ENCODE measurements at regions of chr15 and their contacts with region 1.

Region 1: DNA sequence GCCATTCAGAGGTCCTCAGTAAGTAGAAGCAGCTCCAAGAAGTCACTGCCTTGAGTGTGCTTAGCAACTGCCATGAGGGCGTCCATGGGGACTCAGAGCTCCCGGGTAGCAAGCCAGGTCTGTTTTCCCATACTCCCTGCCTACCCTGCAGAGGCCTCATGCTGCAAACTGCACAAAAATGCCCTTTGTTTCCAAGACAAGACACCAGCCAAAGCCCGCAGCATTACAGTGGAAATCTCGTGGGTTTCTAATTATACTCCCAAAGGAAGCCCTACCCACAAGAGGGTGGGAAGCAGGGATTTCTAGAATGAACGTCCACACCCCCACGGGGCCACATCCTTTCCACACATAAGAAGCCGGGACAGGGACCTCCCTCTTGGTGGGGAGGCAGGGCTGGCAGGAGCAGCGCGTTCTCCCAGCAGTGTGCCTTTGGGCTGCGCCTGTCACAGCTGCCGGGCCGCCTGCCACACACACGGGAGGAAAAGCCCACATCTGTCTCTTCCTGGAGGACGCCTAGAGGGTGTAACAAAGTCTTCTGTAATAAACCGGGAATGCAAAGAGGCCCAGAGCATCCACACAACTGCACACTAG is 31.1 kb downstream of the FAM174B start:
- DNase-seq: no peak
- H3K4me3 ChIP-seq: peak overlapping the region in 3 of 4 donors; percentile 9 to 20 (median 20)
- H3K27ac ChIP-seq: peak overlapping the region; percentile 63 to 74 (median 70)
- H3K4me1 ChIP-seq: peaks cover 36 to 43% (median 39%) of the 10 kb centered on the region in 4 donors
- H3K27me3 ChIP-seq: no peaks in the 10 kb centered on the region
- CTCF ChIP-seq: no peak
- EP300 ChIP-seq: no peak
- POLR2A ChIP-seq: no peak

Region 2: DNA sequence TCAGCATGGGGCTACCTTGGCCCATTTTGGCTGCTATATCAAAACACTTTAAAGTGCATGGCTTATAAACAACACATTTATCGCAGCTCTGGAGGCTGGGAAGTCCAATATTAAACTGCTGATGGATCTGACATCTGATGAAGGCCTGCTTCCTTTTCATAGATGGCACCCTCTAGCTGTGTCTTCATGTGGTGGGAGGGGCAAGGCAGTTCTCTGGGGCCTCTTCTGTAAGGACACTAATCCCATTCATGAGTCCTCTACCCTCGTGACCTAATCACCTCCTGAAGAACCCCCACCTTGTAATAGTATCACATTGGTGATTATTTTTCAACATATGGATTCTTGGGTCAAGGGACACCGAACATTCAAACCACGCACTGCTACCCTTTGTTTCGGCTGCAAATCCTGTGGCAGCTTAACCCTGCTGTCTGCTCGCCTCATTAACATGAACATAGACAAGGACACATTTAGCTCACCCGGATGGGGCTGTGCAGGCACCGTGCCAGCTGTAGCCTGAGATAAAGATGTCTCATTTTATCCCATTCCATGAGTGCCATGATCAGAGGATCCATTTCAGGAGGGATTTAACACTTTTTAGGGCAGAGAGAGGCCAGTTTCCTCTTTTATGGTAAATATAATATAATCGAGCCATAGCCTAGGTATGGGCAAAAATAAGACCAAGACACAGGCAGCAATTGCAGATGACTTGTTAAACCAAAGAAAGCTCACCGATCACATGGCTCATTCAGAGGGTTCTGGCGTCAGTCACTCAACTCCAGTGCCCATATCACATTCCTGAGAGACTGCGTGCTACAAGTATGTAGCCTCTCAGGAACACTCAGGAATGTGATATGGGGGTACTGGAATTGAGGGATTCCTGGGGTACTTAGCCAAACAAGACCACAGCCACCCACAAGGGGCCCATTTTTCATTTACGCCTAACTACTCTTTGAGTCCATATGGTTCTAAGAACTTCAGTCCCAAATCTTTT is 482.0 kb before region 1 on chr15:
- intact Hi-C with region 1: no loop called
- DNase-seq: no peak
- H3K4me3 ChIP-seq: no peak overlapping the region
- H3K27ac ChIP-seq: no peak overlapping the region
- H3K4me1 ChIP-seq: no peaks in the 10 kb centered on the region
- H3K27me3 ChIP-seq: no peaks in the 10 kb centered on the region
- CTCF ChIP-seq: no peak
- EP300 ChIP-seq: no peak
- POLR2A ChIP-seq: no peak

Region 3: GRCh38 chr15:92665100-92665555 is 40.6 kb after region 1 on chr15:
- intact Hi-C with region 1: loop called (anchors 5 kb)
- DNase-seq: peak; percentile 79
- H3K4me3 ChIP-seq: peak overlapping the region in 3 of 4 donors; percentile 3 to 11 (median 11)
- H3K27ac ChIP-seq: peak overlapping the region; percentile 80 to 93 (median 82)
- H3K4me1 ChIP-seq: peaks cover 32 to 48% (median 45%) of the 10 kb centered on the region in 4 donors
- H3K27me3 ChIP-seq: no peaks in the 10 kb centered on the region
- CTCF ChIP-seq: no peak
- EP300 ChIP-seq: peak; percentile 84
- POLR2A ChIP-seq: no peak

Measured in esophagus muscularis mucosa (tissue), 4 donors.